ENCODE measurements at regions of chr21 and their contacts with region 1.

Region 1: DNA sequence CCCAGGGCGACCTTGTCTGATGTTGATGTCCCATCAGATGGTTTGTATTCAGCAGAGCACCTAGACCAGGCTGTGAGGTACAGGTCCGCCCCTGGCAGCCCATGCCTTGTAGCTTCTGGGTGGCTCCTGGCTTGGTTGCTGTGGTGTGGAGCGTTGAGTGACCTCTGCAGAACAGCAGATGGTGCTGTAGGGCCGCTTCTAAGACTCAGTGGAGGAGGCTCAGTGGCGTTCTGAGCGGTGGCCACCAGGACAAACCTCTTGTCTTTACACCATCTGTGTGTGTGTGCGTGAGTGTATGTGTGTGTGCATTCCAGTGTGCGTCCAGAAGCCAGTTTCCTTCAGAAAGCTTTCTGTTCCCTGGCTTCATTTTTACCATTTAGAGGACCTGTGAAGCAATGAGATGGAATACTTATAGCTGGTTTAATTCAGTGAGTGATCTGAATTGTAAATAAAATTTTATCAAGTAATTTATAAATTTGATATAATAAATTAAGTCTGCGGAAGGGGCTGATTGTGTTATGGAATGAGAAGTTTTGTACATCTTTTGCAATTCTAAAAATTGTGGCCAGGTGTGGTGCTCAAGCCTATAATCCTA is 66.1 kb downstream of the ADARB1 start:
- DNase-seq: peak; percentile 82
- ATAC-seq: peak; percentile 94
- H3K4me3 Mint-ChIP-seq: no peak overlapping the region
- H3K27ac Mint-ChIP-seq: no peak overlapping the region
- H3K4me1 Mint-ChIP-seq: peaks cover 9% of the 10 kb centered on the region
- H3K27me3 Mint-ChIP-seq: no peaks in the 10 kb centered on the region

Region 2: GRCh38 chr21:43893536-43894205 is 1246.8 kb before region 1 on chr21:
- CTCF ChIA-PET with region 1: no interaction called
- POLR2A ChIA-PET with region 1: no interaction called
- intact Hi-C with region 1: no loop called
- DNase-seq: peak; percentile 72
- ATAC-seq: peak; percentile 95
- H3K4me3 Mint-ChIP-seq: peak overlapping the region; percentile 70
- H3K27ac Mint-ChIP-seq: peak overlapping the region; percentile 90
- H3K4me1 Mint-ChIP-seq: peaks cover 47% of the 10 kb centered on the region
- H3K27me3 Mint-ChIP-seq: no peaks in the 10 kb centered on the region

Region 3: GRCh38 chr21:44939532-44940115 is 200.8 kb before region 1 on chr21 and contains the start of gene SLX9:
- CTCF ChIA-PET with region 1: interaction called, 58 read pairs
- POLR2A ChIA-PET with region 1: no interaction called
- intact Hi-C with region 1: no loop called
- DNase-seq: peak; percentile 91
- ATAC-seq: peak; percentile 96
- H3K4me3 Mint-ChIP-seq: peak within 1 kb of the TSS; percentile 88
- H3K27ac Mint-ChIP-seq: peak within 1 kb of the TSS; percentile 86
- H3K4me1 Mint-ChIP-seq: peaks cover 37% of the 10 kb centered on the region
- H3K27me3 Mint-ChIP-seq: no peaks in the 10 kb centered on the region
- total RNA-seq, gene SLX9: 60.8 to 68.8 TPM

Region 4: DNA sequence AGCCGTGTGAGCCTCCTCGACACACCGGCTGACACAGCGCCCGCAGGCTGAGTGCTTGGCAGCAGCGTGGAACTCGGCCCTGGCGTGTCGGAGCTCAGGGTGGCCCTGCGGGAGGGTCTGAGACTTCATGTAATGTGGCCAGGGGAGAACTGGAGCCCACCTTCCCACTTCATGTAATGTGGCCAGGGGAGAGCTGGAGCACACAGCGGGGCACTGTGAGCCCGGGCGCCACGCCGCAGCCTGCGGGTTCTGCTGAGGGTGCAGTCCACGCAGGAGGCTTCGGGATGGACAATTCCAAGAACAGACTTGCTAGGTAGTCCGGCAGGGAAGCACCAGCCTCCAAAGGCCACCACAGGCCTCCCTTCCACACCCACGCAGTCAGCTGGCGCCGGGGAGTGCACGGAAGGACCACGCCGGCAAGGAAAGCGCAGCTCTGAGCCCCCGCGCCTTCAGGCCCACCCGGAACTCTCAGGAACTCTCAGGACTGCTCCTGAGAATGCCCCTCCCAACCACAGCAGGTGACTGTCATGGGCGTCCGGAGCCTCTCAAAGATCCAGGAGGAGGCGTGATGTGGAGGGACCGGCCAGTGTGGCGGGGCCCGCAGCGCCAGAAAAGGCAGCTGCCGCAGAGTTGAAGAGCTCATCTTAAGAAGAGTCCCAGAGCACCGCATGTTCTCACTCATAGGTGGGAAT is 85.4 kb before region 1 on chr21:
- CTCF ChIA-PET with region 1: interaction called, 11 read pairs
- POLR2A ChIA-PET with region 1: no interaction called
- intact Hi-C with region 1: no loop called
- DNase-seq: no peak
- ATAC-seq: no peak
- H3K4me3 Mint-ChIP-seq: no peak overlapping the region
- H3K27ac Mint-ChIP-seq: no peak overlapping the region
- H3K4me1 Mint-ChIP-seq: no peaks in the 10 kb centered on the region
- H3K27me3 Mint-ChIP-seq: peaks cover 15% of the 10 kb centered on the region

Region 5: DNA sequence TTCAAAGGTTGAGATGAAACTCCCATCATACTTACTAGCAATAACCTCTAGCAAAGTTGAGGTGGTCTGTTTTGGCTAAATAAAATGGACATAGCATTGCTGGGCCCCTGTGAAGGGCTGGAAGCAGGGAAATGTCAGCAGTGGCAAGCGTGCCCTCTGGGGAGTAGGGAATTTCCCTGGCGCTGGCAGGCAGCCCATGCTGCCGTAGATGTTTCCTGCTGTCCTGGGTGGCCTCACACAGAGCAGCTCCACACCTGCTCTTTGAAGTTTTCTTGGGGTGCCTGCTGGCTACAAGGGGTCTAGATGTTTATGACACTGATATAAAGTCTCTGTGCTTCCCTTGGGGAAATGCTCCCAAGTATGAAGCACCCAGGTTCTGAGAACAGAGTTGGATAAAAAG is 35.9 kb before region 1 on chr21:
- CTCF ChIA-PET with region 1: interaction called, 17 read pairs
- POLR2A ChIA-PET with region 1: no interaction called
- intact Hi-C with region 1: no loop called
- DNase-seq: peak; percentile 67
- ATAC-seq: peak; percentile 68
- H3K4me3 Mint-ChIP-seq: peak overlapping the region; percentile 47
- H3K27ac Mint-ChIP-seq: peak overlapping the region; percentile 87
- H3K4me1 Mint-ChIP-seq: peaks cover 63% of the 10 kb centered on the region
- H3K27me3 Mint-ChIP-seq: no peaks in the 10 kb centered on the region

Region 6: GRCh38 chr21:45130324-45130774 is 10.1 kb before region 1 on chr21:
- CTCF ChIA-PET with region 1: interaction called, 131 read pairs
- POLR2A ChIA-PET with region 1: no interaction called
- intact Hi-C with region 1: no loop called
- DNase-seq: no peak
- ATAC-seq: peak; percentile 35
- H3K4me3 Mint-ChIP-seq: no peak overlapping the region
- H3K27ac Mint-ChIP-seq: no peak overlapping the region
- H3K4me1 Mint-ChIP-seq: peaks cover 31% of the 10 kb centered on the region
- H3K27me3 Mint-ChIP-seq: no peaks in the 10 kb centered on the region

Region 7: GRCh38 chr21:45439161-45439872 is 298.9 kb after region 1 on chr21:
- CTCF ChIA-PET with region 1: interaction called, 4 read pairs
- POLR2A ChIA-PET with region 1: no interaction called
- intact Hi-C with region 1: loop called (anchors 1 to 2 kb)
- DNase-seq: peak; percentile 92
- ATAC-seq: peak; percentile 90
- H3K4me3 Mint-ChIP-seq: peak overlapping the region; percentile 41
- H3K27ac Mint-ChIP-seq: no peak overlapping the region
- H3K4me1 Mint-ChIP-seq: peaks cover 4% of the 10 kb centered on the region
- H3K27me3 Mint-ChIP-seq: peaks cover 3% of the 10 kb centered on the region

Region 8: DNA sequence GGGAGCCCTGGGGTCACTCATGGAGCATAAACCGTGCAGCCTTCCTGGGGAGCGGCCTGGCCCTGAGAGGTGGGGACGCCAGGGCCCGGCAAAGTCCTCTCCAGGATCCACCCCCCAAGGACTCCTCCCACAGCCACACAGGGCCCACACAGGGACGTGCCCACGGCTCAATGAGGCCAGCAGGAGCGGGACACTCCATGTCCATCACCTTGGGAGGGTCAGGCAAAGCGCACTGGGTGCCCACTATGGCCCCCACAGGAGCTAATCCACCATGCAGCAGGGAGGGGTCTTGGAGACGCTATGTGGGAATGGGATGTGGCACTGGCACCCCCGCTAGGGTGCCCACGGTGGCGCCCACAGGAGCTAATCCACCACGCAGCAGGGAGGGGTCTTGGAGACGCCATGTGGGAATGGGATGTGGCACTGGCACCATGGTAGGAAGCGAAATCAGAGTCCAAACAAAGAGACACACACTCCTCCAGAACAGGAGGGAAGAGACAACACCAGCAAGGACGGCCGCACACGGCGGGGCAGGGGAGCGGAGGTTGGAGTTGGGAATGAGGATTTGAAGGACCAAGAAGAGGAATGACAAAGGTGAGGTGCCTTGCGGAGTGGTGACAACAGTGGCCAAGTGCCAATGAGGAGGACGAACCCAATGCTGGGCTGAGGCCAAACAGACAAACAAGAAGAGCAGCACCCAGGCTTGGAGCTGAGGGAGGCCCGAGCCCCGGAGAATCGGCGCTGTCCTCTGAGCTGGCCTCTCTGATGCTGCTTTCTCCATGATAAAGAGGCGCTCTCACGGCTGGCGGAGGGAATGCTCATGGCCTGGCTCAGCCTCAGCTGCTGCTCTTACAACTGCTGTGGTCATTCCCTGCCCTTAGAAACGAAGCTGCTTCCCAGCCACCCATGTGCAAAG is 419.9 kb after region 1 on chr21:
- CTCF ChIA-PET with region 1: no interaction called
- POLR2A ChIA-PET with region 1: no interaction called
- intact Hi-C with region 1: no loop called
- DNase-seq: no peak
- ATAC-seq: no peak
- H3K4me3 Mint-ChIP-seq: no peak overlapping the region
- H3K27ac Mint-ChIP-seq: no peak overlapping the region
- H3K4me1 Mint-ChIP-seq: peaks cover 2% of the 10 kb centered on the region
- H3K27me3 Mint-ChIP-seq: peaks cover 7% of the 10 kb centered on the region